ENCODE measurements at regions of chr14 and their contacts with region 1.

Region 1: GRCh38 chr14:69818757-69819191 is 21.7 kb upstream of the SLC10A1 start:
- DNase-seq: peak; percentile 62
- H3K4me3 ChIP-seq: no peak overlapping the region
- H3K27ac ChIP-seq: no peak overlapping the region
- H3K4me1 ChIP-seq: peaks cover 4% of the 10 kb centered on the region
- H3K27me3 ChIP-seq: no peaks in the 10 kb centered on the region
- CTCF ChIP-seq: peak; percentile 67 to 82

Region 2: DNA sequence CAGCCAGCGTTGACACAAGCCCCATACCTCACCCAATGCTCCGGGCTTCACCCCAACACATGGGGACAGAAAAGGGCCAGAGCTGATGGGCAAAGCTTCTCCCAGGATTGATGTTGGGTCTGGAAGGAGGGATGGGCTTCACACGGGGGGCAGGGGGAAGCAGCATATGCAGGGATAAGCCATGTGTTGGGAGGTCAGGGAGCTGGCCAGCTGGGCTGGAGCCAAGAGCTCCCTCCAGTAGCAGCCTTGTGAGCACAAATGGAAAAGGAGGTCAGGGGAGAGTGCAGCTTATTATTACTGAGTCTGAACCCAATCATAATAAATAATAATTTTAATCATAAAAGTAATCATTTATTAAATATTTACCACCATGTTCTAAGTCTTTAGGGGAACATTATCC is 325.0 kb before region 1 on chr14:
- CTCF ChIA-PET with region 1: no interaction called
- dilution Hi-C with region 1: no loop called
- in situ Hi-C with region 1: no loop called
- intact Hi-C with region 1: no loop called
- DNase-seq: no peak
- H3K4me3 ChIP-seq: no peak overlapping the region
- H3K27ac ChIP-seq: no peak overlapping the region
- H3K4me1 ChIP-seq: no peaks in the 10 kb centered on the region
- H3K27me3 ChIP-seq: peaks cover 5% of the 10 kb centered on the region
- CTCF ChIP-seq: no peak

Region 3: DNA sequence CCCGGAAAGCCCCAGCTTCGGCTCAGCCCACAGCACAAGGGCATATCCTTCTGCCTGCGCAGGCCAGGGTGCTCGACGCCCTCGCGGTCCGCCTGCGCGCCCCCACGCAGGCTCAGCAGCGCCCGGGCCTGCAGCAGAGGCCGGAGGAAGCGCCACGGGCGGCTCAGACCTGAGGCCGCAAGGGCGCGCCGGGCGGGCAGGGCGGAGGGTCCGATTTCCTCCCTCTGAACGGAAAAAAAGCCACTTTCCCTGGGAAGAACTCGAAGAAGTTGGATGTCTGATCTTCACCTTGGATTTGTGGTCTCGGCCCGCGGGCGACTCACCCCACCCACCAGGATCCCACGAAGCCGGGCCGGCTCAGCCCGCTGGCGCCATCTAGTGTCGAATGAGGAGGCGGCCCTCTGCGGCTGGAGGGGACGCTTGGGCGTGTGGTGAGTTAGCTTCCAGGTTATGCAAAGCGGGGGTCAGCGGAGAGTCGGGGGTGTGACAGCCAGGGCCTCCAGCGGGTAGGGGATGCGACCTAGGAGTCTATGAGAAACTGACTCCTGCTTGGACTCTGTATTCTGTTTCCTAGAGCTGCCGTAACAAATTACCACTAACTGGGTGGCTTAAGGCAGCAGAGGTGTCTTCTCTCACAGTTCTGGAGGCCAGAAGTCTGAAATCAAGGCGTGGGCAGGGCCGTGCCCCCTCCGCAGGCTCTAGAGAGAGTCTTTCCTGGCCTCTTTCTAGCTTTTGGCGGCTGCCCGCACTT is 91.8 kb before region 1 on chr14:
- CTCF ChIA-PET with region 1: no interaction called
- dilution Hi-C with region 1: no loop called
- in situ Hi-C with region 1: no loop called
- intact Hi-C with region 1: loop called (anchors 5 kb)
- DNase-seq: peak; percentile 50
- H3K4me3 ChIP-seq: peak overlapping the region in 2 of 3 experiments; percentile 40 to 41
- H3K27ac ChIP-seq: no peak overlapping the region
- H3K4me1 ChIP-seq: peaks cover 8% of the 10 kb centered on the region
- H3K27me3 ChIP-seq: no peaks in the 10 kb centered on the region
- CTCF ChIP-seq: peak; percentile 85 to 98

Region 4: DNA sequence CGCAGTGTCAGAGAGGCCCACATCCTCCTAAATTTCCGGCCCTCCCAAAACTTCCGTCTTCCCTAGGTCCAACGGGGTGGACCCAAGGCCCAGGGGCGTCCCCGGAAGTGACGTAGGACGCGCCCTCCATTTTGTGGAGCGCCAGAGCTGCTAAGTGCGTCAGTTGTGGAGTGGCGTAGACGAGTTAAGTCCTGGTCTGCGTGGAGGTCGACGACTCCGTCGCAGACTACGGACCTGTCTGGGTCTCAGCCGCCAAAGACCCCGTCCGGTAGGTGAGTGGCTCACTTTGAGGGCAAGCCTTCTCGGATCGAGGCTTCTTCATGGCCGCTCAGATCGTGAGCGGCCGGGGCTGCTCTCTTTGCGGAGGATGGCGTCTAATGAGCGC is 51.8 kb before region 1 on chr14 and contains the start of gene SRSF5:
- CTCF ChIA-PET with region 1: no interaction called
- dilution Hi-C with region 1: no loop called
- in situ Hi-C with region 1: no loop called
- intact Hi-C with region 1: no loop called
- DNase-seq: peak; percentile 94
- H3K4me3 ChIP-seq: peak within 1 kb of the TSS; percentile 87 to 96 (median 90)
- H3K27ac ChIP-seq: peak within 1 kb of the TSS; percentile 98
- H3K4me1 ChIP-seq: peaks cover 17% of the 10 kb centered on the region
- H3K27me3 ChIP-seq: no peaks in the 10 kb centered on the region
- CTCF ChIP-seq: no peak
- total RNA-seq, gene SRSF5: 125 to 257 TPM

Region 5: DNA sequence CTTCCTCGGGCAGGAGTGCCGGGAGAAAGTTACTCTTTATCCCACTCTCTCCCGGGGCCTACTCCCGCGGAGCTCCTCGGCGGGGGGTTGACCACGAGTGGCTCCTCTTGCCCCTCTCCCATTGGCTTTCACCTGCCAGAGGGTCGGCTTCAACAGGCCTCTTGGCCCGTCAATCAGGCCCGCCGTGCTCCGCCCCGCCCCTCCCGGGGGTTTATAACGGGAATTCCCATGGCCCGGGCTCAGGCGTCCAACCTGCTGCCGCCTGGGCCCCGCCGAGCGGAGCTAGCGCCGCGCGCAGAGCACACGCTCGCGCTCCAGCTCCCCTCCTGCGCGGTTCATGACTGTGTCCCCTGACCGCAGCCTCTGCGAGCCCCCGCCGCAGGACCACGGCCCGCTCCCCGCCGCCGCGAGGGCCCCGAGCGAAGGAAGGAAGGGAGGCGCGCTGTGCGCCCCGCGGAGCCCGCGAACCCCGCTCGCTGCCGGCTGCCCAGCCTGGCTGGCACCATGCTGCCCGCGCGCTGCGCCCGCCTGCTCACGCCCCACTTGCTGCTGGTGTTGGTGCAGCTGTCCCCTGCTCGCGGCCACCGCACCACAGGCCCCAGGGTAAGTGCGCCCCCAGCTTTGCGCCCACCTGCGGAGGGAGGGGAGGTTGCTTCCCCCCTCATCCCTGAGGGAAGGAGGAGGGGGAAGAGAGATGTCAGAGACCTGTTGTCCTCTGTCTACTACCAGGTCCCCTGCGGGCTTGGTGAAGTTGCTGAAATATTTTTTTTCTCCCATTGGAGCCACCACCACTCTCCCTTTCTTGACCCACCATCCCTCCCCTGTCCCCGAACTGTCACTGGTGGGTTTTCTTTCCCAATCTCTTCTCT is 60.6 kb after region 1 on chr14 and contains the start of gene SMOC1:
- CTCF ChIA-PET with region 1: no interaction called
- dilution Hi-C with region 1: no loop called
- in situ Hi-C with region 1: no loop called
- intact Hi-C with region 1: loop called (anchors 2 kb)
- DNase-seq: peak; percentile 85
- H3K4me3 ChIP-seq: peak within 1 kb of the TSS in 2 of 3 experiments; percentile 49 to 50
- H3K27ac ChIP-seq: no peak within 1 kb of the TSS
- H3K4me1 ChIP-seq: peaks cover 5% of the 10 kb centered on the region
- H3K27me3 ChIP-seq: no peaks in the 10 kb centered on the region
- CTCF ChIP-seq: no peak
- total RNA-seq, gene SMOC1: 22.3 to 44.9 TPM

Region 6: DNA sequence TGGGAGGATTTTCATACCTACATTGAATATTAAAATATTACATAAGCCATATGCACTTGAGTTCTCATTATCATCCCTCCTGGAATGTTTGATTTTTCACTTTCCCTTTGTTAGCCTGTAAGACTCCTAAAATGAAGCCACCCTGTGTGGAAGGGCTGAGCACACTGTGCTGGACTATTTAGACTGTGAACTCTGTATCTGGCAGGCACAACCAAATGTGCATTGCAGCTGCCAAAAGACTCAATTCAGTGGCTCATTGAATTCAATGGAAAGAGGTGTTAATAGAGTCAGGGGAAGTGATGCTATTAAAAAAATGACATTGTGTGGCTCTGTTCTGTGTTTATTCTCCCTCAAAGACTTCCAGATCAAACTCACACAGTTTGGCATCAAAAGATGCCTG is 171.5 kb after region 1 on chr14:
- CTCF ChIA-PET with region 1: no interaction called
- dilution Hi-C with region 1: loop called (anchors 5 kb)
- in situ Hi-C with region 1: no loop called
- intact Hi-C with region 1: no loop called
- DNase-seq: no peak
- H3K4me3 ChIP-seq: no peak overlapping the region
- H3K27ac ChIP-seq: no peak overlapping the region
- H3K4me1 ChIP-seq: peaks cover 9% of the 10 kb centered on the region
- H3K27me3 ChIP-seq: no peaks in the 10 kb centered on the region
- CTCF ChIP-seq: no peak

Region 7: DNA sequence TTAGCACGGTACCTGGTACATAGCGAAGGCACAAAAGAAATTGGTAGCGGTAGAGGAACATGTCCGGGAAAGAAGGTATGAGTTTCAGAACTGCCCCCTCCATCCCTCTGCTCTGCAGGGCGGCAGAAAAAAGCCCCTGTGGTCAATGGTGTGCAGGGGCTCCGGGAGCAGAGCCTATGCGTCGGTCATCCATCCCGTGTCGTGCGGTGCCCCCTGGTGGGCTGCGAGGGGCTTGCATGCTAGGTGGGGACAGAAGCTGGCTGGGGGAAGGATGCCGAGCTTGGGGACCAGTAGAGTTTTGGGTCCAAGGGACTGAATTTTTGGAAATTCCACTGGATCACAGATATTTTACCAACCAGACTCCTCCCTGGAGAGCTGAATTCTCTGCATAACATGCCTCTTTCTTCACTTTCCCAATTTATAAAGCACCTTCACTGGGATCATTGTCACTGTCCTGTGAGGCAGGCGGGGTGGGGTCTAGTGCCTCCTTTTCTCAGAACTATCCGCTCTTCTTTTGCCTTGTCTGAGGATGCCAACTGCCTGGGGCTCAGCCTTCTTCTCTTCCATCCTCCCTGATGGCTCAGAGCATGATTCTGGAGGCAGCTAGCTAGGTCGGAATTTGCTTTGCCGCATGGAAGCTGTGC is 209.1 kb after region 1 on chr14:
- CTCF ChIA-PET with region 1: no interaction called
- dilution Hi-C with region 1: loop called (anchors 5 kb)
- in situ Hi-C with region 1: loop called (anchors 5 kb)
- intact Hi-C with region 1: loop called (anchors 1 kb)
- DNase-seq: no peak
- H3K4me3 ChIP-seq: no peak overlapping the region
- H3K27ac ChIP-seq: no peak overlapping the region
- H3K4me1 ChIP-seq: peaks cover 17% of the 10 kb centered on the region
- H3K27me3 ChIP-seq: no peaks in the 10 kb centered on the region
- CTCF ChIP-seq: peak; percentile 88 to 97

Region 8: DNA sequence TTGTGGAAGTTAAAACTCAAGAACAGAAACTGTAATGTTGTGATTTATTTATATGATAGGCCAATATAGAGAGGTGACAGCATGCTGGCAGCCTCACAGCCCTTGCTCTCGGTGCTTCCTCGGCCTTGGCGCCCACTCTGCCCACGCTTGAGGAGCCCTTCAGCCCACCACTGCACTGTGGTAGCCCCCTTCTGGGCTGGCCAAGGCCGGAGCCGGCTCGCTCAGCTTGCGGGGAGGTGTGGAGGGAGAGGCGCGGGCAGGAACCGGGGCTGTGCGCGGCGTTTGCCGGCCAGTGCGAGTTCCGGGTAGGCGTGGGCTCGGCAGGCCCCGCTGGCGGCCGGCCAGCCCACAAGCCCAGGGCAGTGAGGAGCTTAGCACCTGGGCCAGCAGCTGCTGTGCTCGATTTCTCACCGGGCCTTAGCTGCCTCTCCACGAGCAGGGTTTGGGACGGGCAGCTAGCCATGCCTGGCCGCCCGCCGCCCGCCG is 435.7 kb after region 1 on chr14:
- CTCF ChIA-PET with region 1: no interaction called
- dilution Hi-C with region 1: no loop called
- in situ Hi-C with region 1: no loop called
- intact Hi-C with region 1: loop called (anchors 10 kb)
- DNase-seq: peak; percentile 63
- H3K4me3 ChIP-seq: peak overlapping the region in 2 of 3 experiments; percentile 50 to 55
- H3K27ac ChIP-seq: no peak overlapping the region
- H3K4me1 ChIP-seq: peaks cover 3% of the 10 kb centered on the region
- H3K27me3 ChIP-seq: no peaks in the 10 kb centered on the region
- CTCF ChIP-seq: no peak

Region 9: DNA sequence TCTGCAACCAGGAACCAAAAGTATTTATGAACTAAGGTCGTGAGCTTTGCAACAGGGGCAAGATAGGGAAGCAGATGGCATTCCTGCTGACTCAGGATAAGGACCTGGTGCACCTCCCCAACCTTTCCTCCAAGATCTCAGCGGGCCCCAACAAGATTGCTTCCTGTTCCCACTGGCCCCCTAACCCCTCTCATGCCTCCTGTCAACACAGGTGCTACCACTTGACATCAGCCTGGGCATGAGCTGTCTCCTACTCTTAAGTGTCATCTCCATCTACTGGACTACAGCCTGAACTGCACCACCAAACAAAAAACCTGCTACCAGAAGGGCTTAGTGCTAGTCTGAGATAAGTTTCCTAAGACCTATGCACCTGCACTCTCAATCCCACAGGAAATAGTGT is 749.0 kb after region 1 on chr14:
- CTCF ChIA-PET with region 1: no interaction called
- dilution Hi-C with region 1: no loop called
- in situ Hi-C with region 1: no loop called
- intact Hi-C with region 1: loop called (anchors 5 kb)
- DNase-seq: peak; percentile 43
- H3K4me3 ChIP-seq: no peak overlapping the region
- H3K27ac ChIP-seq: no peak overlapping the region
- H3K4me1 ChIP-seq: no peaks in the 10 kb centered on the region
- H3K27me3 ChIP-seq: no peaks in the 10 kb centered on the region
- CTCF ChIP-seq: peak; percentile 69 to 77

Measured in mammary epithelial cell (primary cell).